ENCODE measurements at regions of chr6 and their contacts with region 1.

Region 1: GRCh38 chr6:13865141-13865540 is 50.8 kb upstream of the MCUR1 start:
- DNase-seq: no peak
- ATAC-seq: no peak
- H3K4me3 Mint-ChIP-seq: no peak overlapping the region
- H3K27ac Mint-ChIP-seq: no peak overlapping the region
- H3K4me1 Mint-ChIP-seq: peaks cover 3% of the 10 kb centered on the region
- H3K27me3 Mint-ChIP-seq: peaks cover 33% of the 10 kb centered on the region
- CTCF ChIP-seq: no peak

Region 2: GRCh38 chr6:13742961-13743735 is 122.0 kb before region 1 on chr6:
- CTCF ChIA-PET with region 1: no interaction called
- POLR2A ChIA-PET with region 1: interaction called, 10 read pairs
- intact Hi-C with region 1: no loop called
- DNase-seq: no peak
- ATAC-seq: no peak
- H3K4me3 Mint-ChIP-seq: peak overlapping the region; percentile 53
- H3K27ac Mint-ChIP-seq: no peak overlapping the region
- H3K4me1 Mint-ChIP-seq: no peaks in the 10 kb centered on the region
- H3K27me3 Mint-ChIP-seq: no peaks in the 10 kb centered on the region
- CTCF ChIP-seq: no peak

Region 3: DNA sequence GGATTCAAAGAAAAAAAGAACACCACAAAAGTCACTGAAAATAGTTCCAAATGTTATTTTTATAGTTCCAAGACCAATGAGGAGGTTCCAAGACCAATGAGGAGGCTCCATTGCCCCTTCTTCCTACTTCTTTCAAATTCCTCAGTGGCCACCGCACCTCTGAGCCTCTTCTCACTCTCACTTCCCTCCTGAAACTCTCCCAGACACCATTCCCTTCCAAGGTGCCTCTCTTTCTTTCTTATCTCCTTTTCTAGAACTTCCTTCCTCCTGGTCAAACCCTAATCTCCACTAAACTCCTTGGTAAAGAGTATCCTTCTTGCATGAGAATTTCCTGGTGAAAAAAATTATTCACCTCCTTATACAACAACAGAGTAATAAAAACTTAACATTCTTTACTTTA is 30.4 kb before region 1 on chr6:
- CTCF ChIA-PET with region 1: no interaction called
- POLR2A ChIA-PET with region 1: no interaction called
- intact Hi-C with region 1: loop called (anchors 1 kb)
- DNase-seq: no peak
- ATAC-seq: no peak
- H3K4me3 Mint-ChIP-seq: no peak overlapping the region
- H3K27ac Mint-ChIP-seq: no peak overlapping the region
- H3K4me1 Mint-ChIP-seq: peaks cover 17% of the 10 kb centered on the region
- H3K27me3 Mint-ChIP-seq: peaks cover 3% of the 10 kb centered on the region
- CTCF ChIP-seq: no peak

Measured in activated B cell treated with CpG ODN at 0.5 μM for 24 hours (primary cell).